ENCODE measurements at regions of chr14 and their contacts with region 1.

Region 1: GRCh38 chr14:63287746-63288473 is 30.8 kb downstream of the GPHB5 start:
- DNase-seq: no peak
- H3K4me3 ChIP-seq: no peak overlapping the region
- H3K27ac ChIP-seq: no peak overlapping the region
- H3K4me1 ChIP-seq: no peaks in the 10 kb centered on the region
- H3K27me3 ChIP-seq: no peaks in the 10 kb centered on the region
- CTCF ChIP-seq: no peak

Region 2: GRCh38 chr14:61533511-61534510 is 1754.1 kb before region 1 on chr14:
- intact Hi-C with region 1: loop called (anchors 5 kb)
- DNase-seq: peak in 1 of 2 donors; percentile 37
- H3K4me3 ChIP-seq: no peak overlapping the region
- H3K27ac ChIP-seq: no peak overlapping the region
- H3K4me1 ChIP-seq: no peaks in the 10 kb centered on the region
- H3K27me3 ChIP-seq: no peaks in the 10 kb centered on the region
- CTCF ChIP-seq: no peak

Region 3: DNA sequence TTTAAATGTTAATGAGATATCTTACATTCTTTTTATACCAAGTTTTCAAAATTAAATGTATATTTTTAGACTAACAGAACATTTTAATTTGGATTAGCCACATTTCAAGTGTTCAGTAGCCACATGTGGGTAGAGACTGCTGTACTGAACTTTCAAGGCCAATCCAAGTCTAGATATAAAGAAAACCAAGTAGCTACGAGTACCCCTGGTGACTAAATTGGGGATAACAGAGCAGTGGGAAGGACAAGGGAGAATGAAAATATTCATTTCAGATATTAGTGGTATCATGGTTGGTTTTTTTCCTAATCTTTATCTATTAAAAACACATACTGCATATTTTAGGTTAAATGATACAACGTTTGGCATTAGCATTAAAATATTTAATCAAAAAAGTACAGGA is 153.1 kb before region 1 on chr14:
- intact Hi-C with region 1: no loop called
- DNase-seq: no peak
- H3K4me3 ChIP-seq: no peak overlapping the region
- H3K27ac ChIP-seq: no peak overlapping the region
- H3K4me1 ChIP-seq: no peaks in the 10 kb centered on the region
- H3K27me3 ChIP-seq: no peaks in the 10 kb centered on the region
- CTCF ChIP-seq: no peak

Region 4: DNA sequence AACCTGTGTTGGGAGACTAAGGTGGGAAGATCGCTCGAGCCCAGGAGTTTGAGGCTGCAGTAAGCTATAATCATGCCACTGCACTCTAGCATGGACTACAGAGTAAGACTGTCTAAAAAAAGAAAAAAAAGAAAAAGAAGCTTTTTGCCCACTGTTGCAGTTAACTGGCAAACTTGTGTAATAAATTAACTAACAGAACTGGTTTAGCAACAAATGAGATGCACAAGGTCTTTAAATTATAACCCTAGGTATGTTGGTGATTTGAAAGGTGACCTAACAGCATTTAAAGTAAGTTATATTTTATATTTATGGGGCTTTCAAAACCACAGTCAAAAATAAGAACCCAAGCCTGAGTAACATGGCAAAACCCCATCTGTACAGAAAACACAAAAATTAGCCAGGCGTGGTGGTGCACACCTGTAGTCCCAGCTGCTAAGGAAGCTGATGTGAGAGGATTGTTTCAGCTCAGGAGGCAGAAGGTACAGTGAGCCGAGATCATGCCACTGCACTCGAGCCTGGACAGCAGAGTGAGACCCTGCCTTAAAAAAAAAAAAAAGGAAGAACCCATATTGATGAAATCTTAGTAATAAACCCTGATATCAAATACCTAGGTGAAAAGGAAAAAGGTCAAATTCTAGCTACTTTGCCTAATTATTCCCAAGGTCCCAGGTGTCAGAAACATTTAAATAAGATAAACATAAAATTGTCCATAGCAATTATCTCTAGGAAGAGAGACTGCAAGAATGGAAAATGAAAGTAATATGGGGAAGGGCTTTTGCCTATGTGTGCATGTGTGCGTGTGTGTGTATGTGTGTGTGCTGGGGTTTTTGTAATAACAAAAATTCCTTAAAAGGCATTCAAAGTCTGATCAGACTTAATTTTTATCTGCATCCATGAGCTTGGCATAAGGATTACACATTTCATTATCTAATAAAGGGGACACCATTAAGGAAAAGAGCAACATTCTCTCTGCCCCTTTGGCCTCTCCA is 580.3 kb after region 1 on chr14:
- intact Hi-C with region 1: no loop called
- DNase-seq: no peak
- H3K4me3 ChIP-seq: no peak overlapping the region
- H3K27ac ChIP-seq: peak overlapping the region in 1 of 2 donors; percentile 31
- H3K4me1 ChIP-seq: peaks cover 0 to 11% of the 10 kb centered on the region in 2 donors
- H3K27me3 ChIP-seq: no peaks in the 10 kb centered on the region
- CTCF ChIP-seq: no peak